B cell (primary cell): ENCODE measurements at regions of chr13 and their contacts with region 1.

Region 1: DNA sequence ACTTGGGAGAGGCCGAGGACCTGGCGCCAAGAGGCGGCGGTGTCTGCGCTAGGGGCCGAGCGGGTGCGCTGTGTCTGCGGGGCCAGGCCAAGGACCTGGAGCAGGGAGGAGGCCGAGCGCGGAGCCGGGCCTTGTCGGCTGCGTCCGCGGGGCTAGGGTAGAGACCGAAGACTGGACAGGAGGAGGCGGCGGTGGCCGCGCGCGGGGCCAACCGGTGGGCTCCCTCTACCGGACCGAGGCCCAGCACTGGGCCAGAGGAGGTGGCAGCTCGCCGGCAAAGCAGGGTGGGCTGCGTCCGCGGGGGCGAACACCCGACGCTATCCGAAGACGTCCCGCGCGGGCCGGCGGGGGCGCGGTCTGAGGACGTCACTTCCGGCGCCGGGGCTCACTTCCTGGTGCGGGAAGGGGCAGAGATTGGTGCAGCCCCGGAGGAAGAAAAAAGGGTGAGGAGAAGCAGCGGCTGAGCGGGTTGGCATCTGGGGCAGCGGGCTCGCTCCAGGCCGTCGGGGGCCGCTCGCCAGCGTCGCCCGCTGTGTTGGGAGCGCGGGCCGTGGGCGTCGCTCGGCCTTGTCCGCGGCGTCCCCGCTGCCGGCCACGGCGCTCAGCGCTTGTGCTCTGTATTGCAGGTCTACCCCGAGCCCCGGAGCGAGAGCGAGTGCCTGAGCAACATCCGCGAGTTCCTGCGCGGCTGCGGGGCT is 38.3 kb downstream of the ARHGEF7 start:
- DNase-seq: peak; percentile 96
- ATAC-seq: peak; percentile 82
- H3K4me3 ChIP-seq: peak overlapping the region; percentile 58 to 91 (median 69)
- H3K4me3 Mint-ChIP-seq: peak overlapping the region; percentile 96
- H3K27ac ChIP-seq: peak overlapping the region; percentile 64 to 86
- H3K27ac Mint-ChIP-seq: peak overlapping the region; percentile 97
- H3K4me1 ChIP-seq: peaks cover 18 to 22% of the 10 kb centered on the region in 2 donors
- H3K4me1 Mint-ChIP-seq: peaks cover 30% of the 10 kb centered on the region
- H3K27me3 ChIP-seq: peaks cover 0 to 3% (median 0%) of the 10 kb centered on the region in 4 experiments
- H3K27me3 Mint-ChIP-seq: peaks cover 3% of the 10 kb centered on the region
- CTCF ChIP-seq: no peak

Region 2: GRCh38 chr13:111131611-111132010 is 21.8 kb before region 1 on chr13:
- CTCF ChIA-PET with region 1: no interaction called
- POLR2A ChIA-PET with region 1: no interaction called
- intact Hi-C with region 1: no loop called
- DNase-seq: no peak
- ATAC-seq: no peak
- H3K4me3 ChIP-seq: no peak overlapping the region
- H3K4me3 Mint-ChIP-seq: no peak overlapping the region
- H3K27ac ChIP-seq: no peak overlapping the region
- H3K27ac Mint-ChIP-seq: no peak overlapping the region
- H3K4me1 ChIP-seq: peaks cover 0 to 4% of the 10 kb centered on the region in 2 donors
- H3K4me1 Mint-ChIP-seq: peaks cover 12% of the 10 kb centered on the region
- H3K27me3 ChIP-seq: no peaks in the 10 kb centered on the region
- H3K27me3 Mint-ChIP-seq: peaks cover 2% of the 10 kb centered on the region
- CTCF ChIP-seq: no peak

Region 3: DNA sequence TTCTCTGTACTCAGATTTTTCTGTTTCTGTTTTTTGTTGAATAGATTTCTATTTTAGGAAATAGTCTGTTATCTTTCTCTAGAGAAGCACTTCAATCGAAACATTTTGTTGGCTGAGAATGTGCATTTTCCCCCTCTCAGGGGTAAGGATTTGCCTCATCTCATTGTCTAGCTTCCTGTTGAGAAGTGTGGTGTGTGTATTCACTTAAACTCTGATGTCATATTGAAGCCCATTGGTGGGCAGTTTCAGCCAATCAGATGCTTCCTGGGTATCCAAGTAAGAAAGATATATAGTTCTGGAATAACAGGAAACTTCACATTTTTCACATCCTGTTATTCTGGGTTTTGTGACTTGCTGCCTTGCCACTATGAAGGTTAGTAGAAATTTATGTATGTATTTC is 49.3 kb after region 1 on chr13:
- CTCF ChIA-PET with region 1: interaction called, 3 read pairs
- POLR2A ChIA-PET with region 1: no interaction called
- intact Hi-C with region 1: loop called (anchors 5 kb)
- DNase-seq: peak; percentile 59
- ATAC-seq: peak; percentile 50
- H3K4me3 ChIP-seq: no peak overlapping the region
- H3K4me3 Mint-ChIP-seq: peak overlapping the region; percentile 76
- H3K27ac ChIP-seq: peak overlapping the region; percentile 43 to 76
- H3K27ac Mint-ChIP-seq: peak overlapping the region; percentile 62
- H3K4me1 ChIP-seq: peaks cover 62 to 77% of the 10 kb centered on the region in 2 donors
- H3K4me1 Mint-ChIP-seq: peaks cover 81% of the 10 kb centered on the region
- H3K27me3 ChIP-seq: no peaks in the 10 kb centered on the region
- H3K27me3 Mint-ChIP-seq: no peaks in the 10 kb centered on the region
- CTCF ChIP-seq: no peak

Region 4: DNA sequence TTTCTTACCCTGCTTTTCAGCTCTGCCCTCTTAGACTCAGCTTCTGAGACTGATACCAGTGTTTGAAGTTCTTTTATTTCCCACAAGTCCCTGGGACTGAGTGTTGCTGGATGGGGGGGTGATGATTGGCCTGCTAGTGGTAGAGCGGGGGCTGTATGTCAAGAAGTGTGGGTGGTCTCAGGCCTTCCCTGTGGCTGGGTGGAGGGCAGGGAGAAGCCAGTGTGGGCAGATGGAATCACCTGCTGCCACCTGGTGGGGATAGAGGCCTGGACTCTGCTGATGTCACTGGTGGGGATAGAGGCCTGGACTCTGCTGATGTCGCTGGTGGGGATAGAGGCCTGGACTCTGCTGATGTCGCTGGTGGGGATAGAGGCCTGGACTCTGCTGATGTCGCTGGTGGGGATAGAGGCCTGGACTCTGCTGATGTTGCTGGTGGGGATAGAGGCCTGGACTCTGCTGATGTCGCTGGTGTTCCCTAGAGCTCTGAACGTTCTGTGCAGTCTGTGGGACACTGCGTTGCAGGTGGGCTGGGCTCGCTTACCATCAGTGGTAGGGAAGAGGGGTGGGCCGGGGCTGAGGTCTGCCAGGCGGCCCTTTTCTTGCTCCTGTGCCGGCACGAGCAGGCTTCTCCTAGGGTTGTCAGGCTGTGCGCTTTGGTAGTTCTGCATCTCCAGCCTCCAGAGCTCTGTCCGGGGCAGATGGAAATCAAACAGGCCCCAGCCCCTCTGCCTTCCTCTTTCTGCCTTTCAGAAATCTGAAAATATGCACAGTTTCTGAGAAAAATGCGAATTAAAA is 62.9 kb after region 1 on chr13:
- CTCF ChIA-PET with region 1: interaction called, 4 read pairs
- POLR2A ChIA-PET with region 1: no interaction called
- intact Hi-C with region 1: loop called (anchors 1 kb)
- DNase-seq: peak; percentile 61
- ATAC-seq: peak; percentile 74
- H3K4me3 ChIP-seq: no peak overlapping the region
- H3K4me3 Mint-ChIP-seq: no peak overlapping the region
- H3K27ac ChIP-seq: no peak overlapping the region
- H3K27ac Mint-ChIP-seq: peak overlapping the region; percentile 55
- H3K4me1 ChIP-seq: peaks cover 18 to 31% of the 10 kb centered on the region in 2 donors
- H3K4me1 Mint-ChIP-seq: peaks cover 47% of the 10 kb centered on the region
- H3K27me3 ChIP-seq: no peaks in the 10 kb centered on the region
- H3K27me3 Mint-ChIP-seq: no peaks in the 10 kb centered on the region
- CTCF ChIP-seq: peak; percentile 62

Region 5: GRCh38 chr13:112587212-112587763 is 1433.9 kb after region 1 on chr13:
- CTCF ChIA-PET with region 1: no interaction called
- POLR2A ChIA-PET with region 1: no interaction called
- intact Hi-C with region 1: loop called (anchors 10 kb)
- DNase-seq: peak; percentile 64
- ATAC-seq: peak; percentile 50
- H3K4me3 ChIP-seq: peak overlapping the region; percentile 83 to 96 (median 92)
- H3K4me3 Mint-ChIP-seq: peak overlapping the region; percentile 97
- H3K27ac ChIP-seq: peak overlapping the region; percentile 55 to 76
- H3K27ac Mint-ChIP-seq: peak overlapping the region; percentile 93
- H3K4me1 ChIP-seq: peaks cover 35 to 38% of the 10 kb centered on the region in 2 donors
- H3K4me1 Mint-ChIP-seq: peaks cover 46% of the 10 kb centered on the region
- H3K27me3 ChIP-seq: no peaks in the 10 kb centered on the region
- H3K27me3 Mint-ChIP-seq: no peaks in the 10 kb centered on the region
- CTCF ChIP-seq: no peak